IMR-90 (cell line): ENCODE measurements at regions of chr3 and their contacts with region 1.

Region 1: DNA sequence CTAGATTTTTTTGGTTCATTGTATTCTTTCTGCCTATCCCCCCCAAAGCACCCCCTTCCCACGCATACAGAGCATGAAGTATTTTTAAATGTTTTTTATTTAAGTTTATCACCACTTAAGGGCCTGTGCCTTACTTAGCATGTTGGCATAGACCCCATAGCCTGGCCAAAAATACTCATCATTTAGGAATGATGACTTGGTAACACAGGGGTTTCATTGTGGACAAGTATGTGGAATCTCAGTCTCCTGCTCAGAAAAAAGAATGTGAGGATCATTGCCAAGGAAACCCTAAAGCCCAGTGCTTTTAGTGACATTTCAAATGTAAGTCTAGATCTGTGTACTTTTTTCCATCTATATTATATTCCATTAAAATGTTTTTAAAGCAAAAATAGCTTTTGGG is 146.3 kb downstream of the ALCAM start:
- DNase-seq: peak; percentile 78
- ATAC-seq: peak; percentile 80
- H3K4me3 ChIP-seq: no peak overlapping the region
- H3K27ac ChIP-seq: no peak overlapping the region
- H3K4me1 ChIP-seq: peaks cover 5% of the 10 kb centered on the region; the same call in 1 of the 2 replicates
- H3K27me3 ChIP-seq: no peaks in the 10 kb centered on the region
- CTCF ChIP-seq: no peak
- POLR2A ChIP-seq: no peak
- RAD21 ChIP-seq: no peak

Region 2: DNA sequence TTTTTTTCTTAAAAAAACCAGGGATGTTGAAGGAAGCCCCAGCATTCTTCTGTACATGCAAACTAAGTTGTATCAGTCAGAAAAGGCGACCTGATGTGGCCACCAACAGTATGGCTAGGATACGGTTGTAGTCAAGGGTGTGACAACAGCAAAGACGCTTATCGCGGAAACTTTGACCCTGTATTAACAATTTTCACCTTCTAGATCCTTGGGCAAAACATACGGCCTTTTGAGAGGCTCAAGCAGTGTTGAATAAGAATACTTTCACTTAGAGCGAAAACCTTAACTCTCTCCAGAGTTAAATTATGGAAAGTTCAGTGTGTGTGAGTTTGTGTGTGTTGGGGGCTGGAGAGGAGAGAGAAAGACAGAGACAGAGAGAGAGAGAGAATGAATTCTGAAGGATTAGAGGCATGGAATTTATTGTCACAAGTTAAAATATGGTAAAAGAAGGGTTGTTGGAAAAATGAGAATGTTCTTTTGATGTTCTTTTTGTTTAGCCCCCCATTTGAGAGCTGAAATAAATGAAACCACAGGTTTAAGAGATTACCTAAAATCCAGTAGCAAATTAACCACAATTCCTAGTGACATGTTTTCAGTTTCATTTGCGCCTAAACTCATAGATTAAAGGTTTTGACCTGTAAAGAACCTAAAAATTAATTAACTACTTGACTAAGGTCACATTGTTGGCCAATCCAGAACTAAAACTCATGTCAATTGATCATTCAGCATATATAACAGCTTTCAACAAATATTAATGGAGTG is 137.1 kb before region 1 on chr3:
- CTCF ChIA-PET with region 1: no interaction called
- POLR2A ChIA-PET with region 1: no interaction called
- dilution Hi-C with region 1: no loop called
- in situ Hi-C with region 1: loop called (anchors 5 kb)
- intact Hi-C with region 1: no loop called
- DNase-seq: no peak
- ATAC-seq: no peak
- H3K4me3 ChIP-seq: no peak overlapping the region
- H3K27ac ChIP-seq: no peak overlapping the region
- H3K4me1 ChIP-seq: peaks cover 3% of the 10 kb centered on the region; the same call in 1 of the 2 replicates
- H3K27me3 ChIP-seq: no peaks in the 10 kb centered on the region
- CTCF ChIP-seq: no peak
- POLR2A ChIP-seq: no peak
- RAD21 ChIP-seq: no peak

Region 3: DNA sequence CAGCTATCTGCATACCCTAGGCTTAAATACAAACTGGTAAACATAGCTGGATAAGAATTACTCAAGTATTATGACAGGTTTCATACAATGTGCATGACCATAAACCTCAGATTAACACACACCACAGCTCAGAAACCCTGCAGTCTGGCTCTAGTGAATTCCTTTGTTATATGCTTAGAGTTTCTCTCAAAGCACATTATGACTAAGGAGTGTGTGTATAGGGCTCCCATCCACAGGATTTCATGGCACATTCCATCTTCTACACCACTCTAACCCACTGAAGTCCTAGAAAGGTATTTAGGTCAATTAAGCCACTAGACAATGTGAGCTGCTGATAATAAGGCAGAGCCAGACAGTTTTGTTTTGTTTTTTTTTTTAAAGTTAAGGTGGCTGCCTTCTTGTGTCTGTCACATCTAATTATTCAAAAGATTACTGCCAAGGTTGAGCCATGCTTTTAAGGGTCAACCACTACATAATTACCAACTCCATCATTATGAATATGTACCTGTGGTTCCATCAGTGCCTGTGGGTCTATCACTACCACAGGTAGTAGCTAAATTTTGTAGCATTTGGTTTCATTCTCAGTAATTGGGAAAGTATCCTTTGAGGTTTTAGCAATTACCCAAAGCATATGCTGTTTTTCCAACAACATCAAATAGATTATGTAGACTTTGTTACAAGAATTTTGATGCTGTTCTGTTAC is 39.4 kb before region 1 on chr3:
- CTCF ChIA-PET with region 1: no interaction called
- POLR2A ChIA-PET with region 1: no interaction called
- dilution Hi-C with region 1: no loop called
- in situ Hi-C with region 1: no loop called
- intact Hi-C with region 1: loop called (anchors 5 kb)
- DNase-seq: peak; percentile 86
- ATAC-seq: peak; percentile 98
- H3K4me3 ChIP-seq: no peak overlapping the region
- H3K27ac ChIP-seq: no peak overlapping the region
- H3K4me1 ChIP-seq: peaks cover 2% of the 10 kb centered on the region
- H3K27me3 ChIP-seq: no peaks in the 10 kb centered on the region
- CTCF ChIP-seq: no peak
- POLR2A ChIP-seq: no peak
- RAD21 ChIP-seq: no peak

Region 4: GRCh38 chr3:105613120-105613519 is 100.1 kb after region 1 on chr3:
- CTCF ChIA-PET with region 1: no interaction called
- POLR2A ChIA-PET with region 1: no interaction called
- dilution Hi-C with region 1: no loop called
- in situ Hi-C with region 1: no loop called
- intact Hi-C with region 1: no loop called
- DNase-seq: no peak
- ATAC-seq: 0 out of 2 replicates have a peak, but pooled peaks have one; percentile 17
- H3K4me3 ChIP-seq: no peak overlapping the region
- H3K27ac ChIP-seq: no peak overlapping the region
- H3K4me1 ChIP-seq: no peaks in the 10 kb centered on the region
- H3K27me3 ChIP-seq: no peaks in the 10 kb centered on the region
- CTCF ChIP-seq: no peak
- POLR2A ChIP-seq: no peak
- RAD21 ChIP-seq: no peak

Region 5: DNA sequence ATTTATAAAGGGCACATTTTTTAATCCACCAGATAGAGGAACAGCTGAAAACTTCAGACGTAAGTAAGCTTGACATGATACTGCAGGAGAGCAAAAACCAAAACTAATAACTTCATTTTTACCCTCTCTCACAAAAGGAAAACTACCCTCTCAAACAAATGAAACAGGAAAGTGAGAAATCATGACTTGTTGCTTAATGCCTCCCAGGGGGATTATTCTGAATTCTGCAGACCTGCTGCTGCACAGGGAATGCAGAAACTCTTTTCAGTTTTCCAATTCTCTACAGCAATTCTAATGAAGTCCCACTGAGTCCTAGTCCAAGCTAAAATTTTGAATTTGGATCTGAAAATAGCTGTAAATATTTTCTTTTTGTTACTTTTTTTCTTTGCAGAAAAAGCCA is 1227.1 kb after region 1 on chr3:
- CTCF ChIA-PET with region 1: no interaction called
- POLR2A ChIA-PET with region 1: no interaction called
- dilution Hi-C with region 1: no loop called
- in situ Hi-C with region 1: no loop called
- intact Hi-C with region 1: no loop called
- DNase-seq: no peak
- ATAC-seq: no peak
- H3K4me3 ChIP-seq: no peak overlapping the region
- H3K27ac ChIP-seq: no peak overlapping the region
- H3K4me1 ChIP-seq: no peaks in the 10 kb centered on the region
- H3K27me3 ChIP-seq: no peaks in the 10 kb centered on the region
- CTCF ChIP-seq: no peak
- POLR2A ChIP-seq: no peak
- RAD21 ChIP-seq: no peak